H1 (cell line): ENCODE measurements at regions of chrX and their contacts with region 1.

Region 1: DNA sequence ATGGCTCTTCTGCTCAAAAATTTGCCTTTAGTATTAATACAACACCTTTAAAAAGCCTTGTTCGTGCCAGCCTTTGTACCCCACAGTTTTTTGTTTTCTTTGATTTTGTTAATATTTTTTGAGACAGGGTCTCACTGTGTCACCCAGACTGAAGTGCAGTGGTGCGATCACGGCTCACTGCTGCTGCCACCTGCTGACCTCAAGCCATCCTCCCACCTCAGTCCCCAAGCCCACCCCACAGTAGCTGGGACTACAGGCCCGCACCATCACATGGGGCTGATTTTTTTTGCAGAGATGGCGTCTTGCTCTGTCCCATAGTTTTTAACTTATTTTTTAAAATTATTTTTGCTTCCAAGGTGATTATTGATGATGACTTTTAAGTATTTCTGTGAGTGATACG is 134.0 kb downstream of the HTR2C start:
- DNase-seq: peak in 1 of 2 experiments; percentile 51
- H3K4me3 ChIP-seq: no peak overlapping the region
- H3K27ac ChIP-seq: no peak overlapping the region
- H3K4me1 ChIP-seq: no peaks in the 10 kb centered on the region
- H3K27me3 ChIP-seq: no peaks in the 10 kb centered on the region
- CTCF ChIP-seq: peak; percentile 51 to 79 (median 53)
- EP300 ChIP-seq: no peak
- POLR2A ChIP-seq: no peak
- RAD21 ChIP-seq: peak; percentile 54 to 64

Region 2: DNA sequence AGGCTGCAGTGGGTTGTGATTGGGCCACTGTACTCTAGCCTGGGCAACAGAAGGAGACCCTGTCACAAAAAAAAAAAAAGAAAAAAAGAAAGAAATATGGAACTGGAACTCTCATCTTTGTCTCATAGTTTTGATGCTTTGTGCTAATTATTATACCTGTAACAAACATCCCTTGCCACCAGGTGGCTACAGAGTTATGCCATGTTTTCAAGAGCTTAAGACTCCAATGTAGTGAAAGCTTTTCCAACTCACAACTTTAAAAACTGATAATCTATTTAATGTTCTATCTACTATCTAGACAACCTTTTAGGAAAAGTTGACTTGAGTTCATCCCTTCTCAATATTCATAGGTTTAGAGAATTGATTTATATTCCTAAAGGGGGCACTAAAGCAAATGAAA is 91.6 kb before region 1 on chrX:
- CTCF ChIA-PET with region 1: interaction called, 17 read pairs
- POLR2A ChIA-PET with region 1: no interaction called
- DNase-seq: no peak
- H3K4me3 ChIP-seq: no peak overlapping the region
- H3K27ac ChIP-seq: no peak overlapping the region
- H3K4me1 ChIP-seq: no peaks in the 10 kb centered on the region
- H3K27me3 ChIP-seq: no peaks in the 10 kb centered on the region
- CTCF ChIP-seq: peak in 2 of 3 experiments; percentile 23 to 33; a peak in 2 of 4 replicates
- EP300 ChIP-seq: no peak
- POLR2A ChIP-seq: no peak
- RAD21 ChIP-seq: peak; percentile 37 to 39

Region 3: DNA sequence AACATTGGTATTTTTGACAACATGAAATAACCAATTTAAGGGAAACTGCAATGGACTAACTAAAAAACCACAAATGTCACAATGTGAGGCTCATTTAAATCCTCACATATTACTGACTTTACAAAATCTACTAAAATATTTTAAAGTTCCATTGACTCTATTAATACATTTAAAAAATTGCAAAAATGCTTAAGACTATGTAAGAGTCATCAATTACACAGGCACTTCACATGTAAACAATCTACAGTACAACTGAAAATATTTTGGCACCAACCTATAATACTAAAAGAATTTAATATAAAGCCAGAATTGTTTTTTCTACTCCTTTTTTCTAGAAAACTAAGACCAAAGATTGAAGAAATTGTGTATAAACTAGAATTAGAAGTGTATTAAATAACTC is 394.5 kb after region 1 on chrX:
- CTCF ChIA-PET with region 1: no interaction called
- POLR2A ChIA-PET with region 1: no interaction called
- DNase-seq: no peak
- H3K4me3 ChIP-seq: no peak overlapping the region
- H3K27ac ChIP-seq: no peak overlapping the region
- H3K4me1 ChIP-seq: no peaks in the 10 kb centered on the region; a peak in 1 of 7 replicates
- H3K27me3 ChIP-seq: no peaks in the 10 kb centered on the region
- CTCF ChIP-seq: no peak
- EP300 ChIP-seq: no peak
- POLR2A ChIP-seq: no peak
- RAD21 ChIP-seq: no peak